ENCODE measurements at regions of chr16 and their contacts with region 1.

Region 1: DNA sequence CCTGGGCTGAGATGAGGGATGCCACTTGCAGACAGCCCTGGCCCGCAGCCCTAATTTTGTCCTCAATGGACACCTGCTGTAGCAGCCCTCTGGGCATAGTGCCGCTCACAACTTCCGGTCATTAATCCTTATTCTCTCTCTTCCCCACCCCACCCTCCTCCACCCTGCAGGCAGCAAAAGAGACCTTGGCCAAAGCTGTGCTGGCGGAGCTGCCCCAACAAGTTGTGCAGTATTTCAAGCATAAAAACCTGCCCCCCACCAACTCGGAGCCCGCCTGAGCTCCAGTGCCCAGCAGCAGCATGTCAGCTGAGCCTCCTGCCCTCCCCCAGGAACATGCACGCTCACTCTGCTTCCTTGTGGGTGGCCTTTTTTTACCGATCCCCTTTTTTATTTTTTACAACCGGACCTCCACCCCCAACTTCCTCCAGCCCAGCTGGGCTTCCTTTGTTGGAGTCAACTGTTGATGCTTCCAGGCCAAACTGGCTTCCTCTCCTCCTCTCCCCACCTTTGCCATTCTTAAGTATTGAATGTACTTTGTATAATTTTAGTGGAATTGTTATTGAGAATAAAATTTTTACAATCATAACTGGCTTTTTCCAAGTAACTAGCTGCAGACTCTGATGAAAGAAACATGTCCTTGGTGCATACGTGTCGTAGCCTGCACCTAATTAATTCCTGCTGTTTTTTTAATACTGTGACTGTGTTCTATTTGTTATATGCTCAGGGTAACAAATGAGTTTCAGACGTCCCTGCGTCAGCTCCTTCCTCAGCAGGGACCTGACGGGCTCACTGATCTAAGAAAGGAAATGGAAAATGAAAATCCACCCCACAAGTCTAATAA is 38.2 kb downstream of the PSME3IP1 start:
- DNase-seq: no peak
- ATAC-seq: no peak
- H3K4me3 ChIP-seq: no peak overlapping the region
- H3K27ac ChIP-seq: no peak overlapping the region
- H3K4me1 ChIP-seq: no peaks in the 10 kb centered on the region
- H3K27me3 ChIP-seq: no peaks in the 10 kb centered on the region
- CTCF ChIP-seq: no peak

Region 2: DNA sequence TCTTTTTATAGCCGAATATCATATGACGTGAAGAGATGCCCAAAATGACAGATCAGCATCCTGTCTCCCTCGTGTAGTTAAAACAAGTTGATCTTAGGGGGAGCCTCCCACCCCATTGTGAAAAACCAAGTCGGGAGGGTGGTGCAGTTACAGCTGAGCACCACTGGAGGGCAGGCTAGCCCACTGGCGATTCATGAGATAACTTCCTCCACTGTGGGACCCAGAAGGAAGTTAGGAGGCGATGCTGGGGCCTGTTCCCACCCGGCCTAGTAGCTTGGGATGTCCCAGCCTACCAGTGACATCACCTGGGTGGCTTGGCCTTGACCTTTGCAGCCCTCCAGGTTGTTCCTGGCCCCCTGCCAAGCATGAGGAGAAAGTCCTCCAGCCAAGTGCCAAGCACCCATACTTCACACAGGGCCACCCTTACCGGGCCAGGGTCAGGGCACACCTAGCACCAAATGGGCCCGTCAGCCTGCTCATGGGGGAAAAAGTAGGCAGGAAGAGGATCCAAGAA is 63.3 kb before region 1 on chr16:
- CTCF ChIA-PET with region 1: no interaction called
- POLR2A ChIA-PET with region 1: no interaction called
- in situ Hi-C with region 1: no loop called
- intact Hi-C with region 1: loop called (anchors 10 kb)
- DNase-seq: peak; percentile 53
- ATAC-seq: peak; percentile 74
- H3K4me3 ChIP-seq: no peak overlapping the region
- H3K27ac ChIP-seq: no peak overlapping the region
- H3K4me1 ChIP-seq: no peaks in the 10 kb centered on the region
- H3K27me3 ChIP-seq: no peaks in the 10 kb centered on the region
- CTCF ChIP-seq: peak; percentile 94